K562 (cell line): ENCODE measurements at regions of chr1 and their contacts with region 1.

Region 1: DNA sequence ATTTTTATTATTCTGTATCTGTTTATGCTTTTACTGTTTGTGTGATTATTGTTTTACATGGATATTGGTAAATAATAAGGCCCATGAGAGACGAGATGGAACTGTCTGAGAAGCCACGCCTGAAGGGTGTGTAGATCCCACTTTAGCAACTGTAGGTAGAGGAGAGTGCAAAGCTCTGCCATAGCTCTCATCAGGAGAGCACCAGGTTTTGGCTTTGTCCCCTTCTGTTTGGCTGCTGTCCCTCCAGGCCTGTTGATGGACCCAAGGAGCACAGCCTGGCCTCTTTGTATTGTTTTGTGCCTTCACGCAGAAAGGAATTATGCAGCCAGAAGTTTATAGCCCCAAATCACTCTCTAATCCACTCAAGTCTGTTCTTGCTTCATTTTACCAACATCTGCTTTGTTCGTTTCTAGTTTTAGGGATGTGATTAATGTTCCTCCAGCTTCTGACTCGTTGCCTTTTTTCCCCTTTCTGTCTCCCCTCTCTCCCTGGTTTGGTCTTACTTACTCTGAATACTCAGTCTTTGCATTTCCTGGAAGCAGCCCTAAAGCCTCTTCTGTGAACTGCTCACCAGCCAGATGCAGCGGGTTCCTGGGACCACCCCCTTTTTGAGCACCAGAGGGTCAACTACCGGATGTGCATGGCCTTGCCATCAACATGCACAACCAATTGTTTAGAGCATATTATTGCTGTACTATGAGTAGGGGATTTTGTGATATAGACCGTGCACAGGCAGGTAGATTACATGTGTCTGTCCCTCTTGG is 127.3 kb downstream of the HHAT start:
- DNase-seq: no peak
- ATAC-seq: no peak
- H3K4me3 ChIP-seq: no peak overlapping the region
- H3K27ac ChIP-seq: no peak overlapping the region
- H3K4me1 ChIP-seq: no peaks in the 10 kb centered on the region
- H3K27me3 ChIP-seq: peaks cover 0 to 7% of the 10 kb centered on the region in 2 experiments; a peak in 1 of 5 replicates
- CTCF ChIP-seq: no peak
- EP300 ChIP-seq: no peak
- POLR2A ChIP-seq: no peak
- RAD21 ChIP-seq: no peak

Region 2: DNA sequence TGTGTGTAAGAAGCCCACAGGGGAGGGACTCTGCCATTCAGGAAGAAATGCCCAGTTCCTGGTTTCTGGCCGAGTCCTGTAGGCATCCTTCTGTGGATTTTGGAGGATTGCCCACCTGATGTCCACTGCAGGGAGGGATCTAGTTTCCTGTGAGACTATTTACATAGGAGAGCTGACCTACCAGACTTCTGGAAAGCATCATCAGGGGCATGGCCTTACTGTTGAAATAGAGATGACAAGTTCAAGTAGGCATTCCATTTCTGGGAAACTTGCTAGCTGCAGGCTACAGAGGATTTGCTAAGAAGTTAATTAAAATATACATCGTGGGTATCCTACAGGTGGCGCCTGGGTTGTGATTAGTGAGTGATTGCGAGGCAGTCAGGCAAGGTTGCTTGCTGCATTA is 21.4 kb after region 1 on chr1:
- CTCF ChIA-PET with region 1: no interaction called
- POLR2A ChIA-PET with region 1: no interaction called
- in situ Hi-C with region 1: no loop called
- intact Hi-C with region 1: no loop called
- DNase-seq: peak in 1 of 4 experiments; percentile 4
- ATAC-seq: no peak
- H3K4me3 ChIP-seq: no peak overlapping the region
- H3K27ac ChIP-seq: no peak overlapping the region
- H3K4me1 ChIP-seq: no peaks in the 10 kb centered on the region
- H3K27me3 ChIP-seq: no peaks in the 10 kb centered on the region; a peak in 1 of 5 replicates
- CTCF ChIP-seq: peak in 1 of 3 experiments; percentile 6; a peak in 1 of 6 replicates
- EP300 ChIP-seq: no peak
- POLR2A ChIP-seq: no peak
- RAD21 ChIP-seq: no peak

Region 3: GRCh38 chr1:210527091-210527490 is 71.1 kb after region 1 on chr1:
- CTCF ChIA-PET with region 1: no interaction called
- POLR2A ChIA-PET with region 1: no interaction called
- in situ Hi-C with region 1: no loop called
- intact Hi-C with region 1: no loop called
- DNase-seq: no peak
- ATAC-seq: no peak
- H3K4me3 ChIP-seq: no peak overlapping the region
- H3K27ac ChIP-seq: no peak overlapping the region
- H3K4me1 ChIP-seq: no peaks in the 10 kb centered on the region
- H3K27me3 ChIP-seq: no peaks in the 10 kb centered on the region
- CTCF ChIP-seq: no peak
- EP300 ChIP-seq: no peak
- POLR2A ChIP-seq: no peak
- RAD21 ChIP-seq: no peak

Region 4: GRCh38 chr1:210565306-210565705 is 109.3 kb after region 1 on chr1:
- CTCF ChIA-PET with region 1: no interaction called
- POLR2A ChIA-PET with region 1: no interaction called
- in situ Hi-C with region 1: no loop called
- intact Hi-C with region 1: no loop called
- DNase-seq: no peak
- ATAC-seq: no peak
- H3K4me3 ChIP-seq: no peak overlapping the region
- H3K27ac ChIP-seq: no peak overlapping the region
- H3K4me1 ChIP-seq: 0 out of 5 replicates have a peak, but pooled peaks cover 0 to 7% of the 10 kb centered on the region in 2 experiments
- H3K27me3 ChIP-seq: no peaks in the 10 kb centered on the region; a peak in 1 of 5 replicates
- CTCF ChIP-seq: no peak
- EP300 ChIP-seq: no peak
- POLR2A ChIP-seq: no peak
- RAD21 ChIP-seq: no peak

Region 5: GRCh38 chr1:210951279-210951678 is 495.3 kb after region 1 on chr1:
- CTCF ChIA-PET with region 1: no interaction called
- POLR2A ChIA-PET with region 1: no interaction called
- in situ Hi-C with region 1: no loop called
- intact Hi-C with region 1: loop called (anchors 10 kb)
- DNase-seq: no peak
- ATAC-seq: no peak
- H3K4me3 ChIP-seq: no peak overlapping the region
- H3K27ac ChIP-seq: no peak overlapping the region
- H3K4me1 ChIP-seq: no peaks in the 10 kb centered on the region
- H3K27me3 ChIP-seq: peaks cover 0 to 5% of the 10 kb centered on the region in 2 experiments; a peak in 2 of 5 replicates
- CTCF ChIP-seq: no peak
- EP300 ChIP-seq: no peak
- POLR2A ChIP-seq: no peak
- RAD21 ChIP-seq: no peak